GM12878 (cell line): ENCODE measurements at regions of chr11 and their contacts with region 1.

Region 1: GRCh38 chr11:56783448-56784041 is 35.0 kb upstream of the OR9G4 start:
- DNase-seq: no peak
- ATAC-seq: peak; percentile 63
- H3K4me3 ChIP-seq: no peak overlapping the region
- H3K27ac ChIP-seq: no peak overlapping the region
- H3K4me1 ChIP-seq: peaks cover 4% of the 10 kb centered on the region
- H3K27me3 ChIP-seq: no peaks in the 10 kb centered on the region
- CTCF ChIP-seq: peak; percentile 39 to 65 (median 49); a peak in 4 of 6 replicates
- EP300 ChIP-seq: no peak
- POLR2A ChIP-seq: no peak
- RAD21 ChIP-seq: peak; percentile 60

Region 2: GRCh38 chr11:55714982-55715888 is 1068.3 kb before region 1 on chr11:
- CTCF ChIA-PET with region 1: interaction called, 3 read pairs
- POLR2A ChIA-PET with region 1: no interaction called
- RAD21 ChIA-PET with region 1: interaction called, 3 read pairs
- SMC1A ChIA-PET with region 1: no interaction called
- in situ Hi-C with region 1: no loop called
- intact Hi-C with region 1: loop called (anchors 10 kb)
- DNase-seq: no peak
- ATAC-seq: peak; percentile 82
- H3K4me3 ChIP-seq: no peak overlapping the region
- H3K27ac ChIP-seq: no peak overlapping the region
- H3K4me1 ChIP-seq: no peaks in the 10 kb centered on the region
- H3K27me3 ChIP-seq: no peaks in the 10 kb centered on the region
- CTCF ChIP-seq: peak in 1 of 3 experiments; percentile 28; a peak in 1 of 6 replicates
- EP300 ChIP-seq: no peak
- POLR2A ChIP-seq: no peak
- RAD21 ChIP-seq: no peak

Region 3: DNA sequence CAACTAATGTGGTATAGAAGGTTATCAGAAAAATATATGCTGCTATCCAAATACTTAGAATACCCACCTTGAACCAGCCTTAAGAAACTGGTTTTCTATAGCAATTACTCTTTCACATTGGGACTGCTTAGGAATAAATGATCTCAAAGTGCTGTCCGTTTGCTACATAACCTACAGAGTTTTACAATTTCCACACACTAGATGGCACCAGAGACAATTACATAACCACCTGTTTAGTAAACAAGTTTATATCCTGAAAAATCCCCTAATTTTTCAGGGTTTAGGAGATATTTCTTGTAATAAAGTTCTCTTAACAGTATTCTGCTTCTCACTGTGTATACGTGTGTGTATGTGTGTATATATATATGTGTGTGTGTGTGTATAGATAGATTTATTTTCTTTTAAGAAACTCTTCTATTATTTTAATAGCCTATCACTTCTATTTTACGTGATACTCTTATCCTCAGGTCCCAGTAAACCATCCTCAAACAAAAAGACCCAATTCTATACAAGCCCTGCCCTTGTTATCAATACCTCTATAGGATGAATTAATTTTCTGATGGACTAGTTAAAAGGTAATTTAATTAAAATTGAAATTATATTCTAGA is 840.7 kb before region 1 on chr11:
- CTCF ChIA-PET with region 1: interaction called, 4 read pairs
- POLR2A ChIA-PET with region 1: no interaction called
- RAD21 ChIA-PET with region 1: interaction called, 6 read pairs
- SMC1A ChIA-PET with region 1: interaction called, 4 read pairs
- in situ Hi-C with region 1: no loop called
- intact Hi-C with region 1: loop called (anchors 1 kb)
- DNase-seq: no peak
- ATAC-seq: peak; percentile 61; the same call in 2 of the 3 replicates
- H3K4me3 ChIP-seq: no peak overlapping the region
- H3K27ac ChIP-seq: no peak overlapping the region
- H3K4me1 ChIP-seq: no peaks in the 10 kb centered on the region
- H3K27me3 ChIP-seq: no peaks in the 10 kb centered on the region
- CTCF ChIP-seq: peak; percentile 37 to 61 (median 38); a peak in 4 of 6 replicates
- EP300 ChIP-seq: no peak
- POLR2A ChIP-seq: no peak
- RAD21 ChIP-seq: peak; percentile 58

Region 4: DNA sequence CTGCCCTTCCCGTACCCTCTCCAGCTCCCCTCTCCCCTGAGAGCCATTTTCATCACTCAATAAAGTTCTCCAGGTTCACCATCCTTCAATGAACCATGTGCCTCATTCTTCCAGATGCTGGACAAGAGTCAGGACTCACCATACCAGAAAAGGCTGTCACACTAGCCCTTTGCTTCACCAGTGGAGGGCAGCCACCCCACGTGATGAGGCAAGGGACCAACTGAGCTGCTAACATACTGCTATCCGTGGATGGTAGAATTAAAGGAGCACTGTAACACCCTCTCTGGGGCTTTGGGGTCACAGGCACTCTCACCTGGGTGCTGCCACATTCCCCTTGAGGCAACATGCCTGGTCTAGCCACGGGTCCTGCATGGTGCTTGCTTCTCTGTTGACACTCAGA is 834.2 kb before region 1 on chr11:
- CTCF ChIA-PET with region 1: interaction called, 3 read pairs
- POLR2A ChIA-PET with region 1: no interaction called
- RAD21 ChIA-PET with region 1: interaction called, 3 read pairs
- SMC1A ChIA-PET with region 1: interaction called, 3 read pairs
- in situ Hi-C with region 1: loop called (anchors 5 kb)
- intact Hi-C with region 1: no loop called
- DNase-seq: no peak
- ATAC-seq: no peak
- H3K4me3 ChIP-seq: no peak overlapping the region
- H3K27ac ChIP-seq: no peak overlapping the region
- H3K4me1 ChIP-seq: no peaks in the 10 kb centered on the region
- H3K27me3 ChIP-seq: no peaks in the 10 kb centered on the region
- CTCF ChIP-seq: no peak
- EP300 ChIP-seq: no peak
- POLR2A ChIP-seq: no peak
- RAD21 ChIP-seq: no peak

Region 5: DNA sequence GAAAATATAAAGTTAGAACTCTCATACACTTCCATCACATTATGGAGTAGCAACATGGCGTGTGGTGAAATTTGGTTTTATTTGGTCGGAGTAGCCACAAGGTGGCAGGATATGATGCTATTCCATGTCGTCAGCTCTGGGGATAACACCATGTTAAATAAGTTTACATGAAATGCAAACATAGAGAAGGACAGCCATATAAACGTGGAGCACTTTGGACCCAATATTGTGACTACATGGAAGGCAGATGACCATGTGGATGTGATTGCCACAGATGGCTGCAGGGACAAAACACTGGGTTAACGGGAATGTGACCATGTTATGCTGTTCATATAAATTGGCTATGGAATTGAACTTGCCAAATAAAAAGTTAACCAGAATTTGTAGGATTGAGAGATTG is 261.5 kb before region 1 on chr11:
- CTCF ChIA-PET with region 1: interaction called, 6 read pairs
- POLR2A ChIA-PET with region 1: no interaction called
- RAD21 ChIA-PET with region 1: interaction called, 3 read pairs
- SMC1A ChIA-PET with region 1: no interaction called
- in situ Hi-C with region 1: no loop called
- intact Hi-C with region 1: loop called (anchors 2 kb)
- DNase-seq: no peak
- ATAC-seq: 0 out of 3 replicates have a peak, but pooled peaks have one; percentile 45
- H3K4me3 ChIP-seq: no peak overlapping the region
- H3K27ac ChIP-seq: no peak overlapping the region
- H3K4me1 ChIP-seq: no peaks in the 10 kb centered on the region
- H3K27me3 ChIP-seq: no peaks in the 10 kb centered on the region
- CTCF ChIP-seq: peak in 1 of 3 experiments; percentile 33; a peak in 2 of 6 replicates
- EP300 ChIP-seq: no peak
- POLR2A ChIP-seq: no peak
- RAD21 ChIP-seq: no peak

Region 6: DNA sequence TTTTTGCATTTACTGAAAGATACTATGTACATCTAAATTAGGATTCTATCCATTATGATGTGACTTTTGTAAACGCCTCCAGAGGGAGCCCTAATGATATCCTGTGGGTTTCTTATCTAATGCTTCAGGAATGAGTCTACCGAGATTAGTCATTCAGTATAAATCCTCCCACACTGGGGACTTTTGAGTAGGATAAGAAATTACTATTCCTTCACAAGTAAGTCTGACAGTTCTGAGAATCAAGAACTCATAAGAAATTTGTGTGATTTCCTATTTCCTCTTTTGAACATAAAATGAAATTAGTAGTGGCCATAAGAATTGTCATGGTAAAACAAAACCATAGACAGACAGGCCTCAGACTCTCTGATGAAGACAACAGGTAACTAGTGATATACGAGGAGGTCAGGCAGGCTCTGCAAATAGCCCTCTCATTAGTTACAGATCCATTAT is 158.9 kb before region 1 on chr11:
- CTCF ChIA-PET with region 1: interaction called, 20 read pairs
- POLR2A ChIA-PET with region 1: no interaction called
- RAD21 ChIA-PET with region 1: interaction called, 16 read pairs
- SMC1A ChIA-PET with region 1: interaction called, 19 read pairs
- in situ Hi-C with region 1: no loop called
- intact Hi-C with region 1: loop called (anchors 1 kb)
- DNase-seq: peak; percentile 30
- ATAC-seq: peak; percentile 86
- H3K4me3 ChIP-seq: no peak overlapping the region
- H3K27ac ChIP-seq: no peak overlapping the region
- H3K4me1 ChIP-seq: no peaks in the 10 kb centered on the region
- H3K27me3 ChIP-seq: no peaks in the 10 kb centered on the region
- CTCF ChIP-seq: peak; percentile 12 to 44 (median 29); a peak in 1 of 6 replicates
- EP300 ChIP-seq: peak in 1 of 2 experiments; percentile 82; a peak in 3 of 4 replicates
- POLR2A ChIP-seq: no peak
- RAD21 ChIP-seq: peak; percentile 48; the same call in 1 of the 2 replicates